BJ (cell line): ENCODE measurements at regions of chr7 and their contacts with region 1.

Region 1: DNA sequence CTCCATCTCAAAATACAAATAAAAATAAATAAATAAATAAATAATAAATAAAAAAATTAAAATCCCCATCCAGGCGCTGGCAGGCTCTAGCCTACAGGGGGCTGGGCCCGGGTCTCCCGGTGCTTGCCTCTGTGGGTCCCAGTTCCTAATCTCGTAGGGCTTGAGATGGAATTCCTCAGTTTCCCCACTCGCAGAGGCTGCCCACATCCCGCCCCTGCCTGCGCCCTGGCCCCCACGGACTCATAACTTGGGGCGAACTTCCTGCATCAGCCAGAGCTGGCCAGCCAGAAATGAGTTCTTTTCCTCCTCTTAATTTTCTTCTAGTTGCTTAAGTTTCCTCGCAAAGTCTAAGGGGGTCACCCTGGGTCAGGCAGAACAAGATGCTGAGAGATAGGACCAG is 22.0 kb upstream of the SRRM3 start:
- DNase-seq: no peak
- H3K4me3 ChIP-seq: no peak overlapping the region
- H3K27me3 ChIP-seq: no peaks in the 10 kb centered on the region
- CTCF ChIP-seq: no peak

Region 2: GRCh38 chr7:76166404-76167255 is 13.1 kb before region 1 on chr7:
- CTCF ChIA-PET with region 1: interaction called, 27 read pairs
- POLR2A ChIA-PET with region 1: no interaction called
- DNase-seq: peak; percentile 61
- H3K4me3 ChIP-seq: peak overlapping the region; percentile 69
- H3K27me3 ChIP-seq: no peaks in the 10 kb centered on the region
- CTCF ChIP-seq: peak; percentile 41; the same call in 1 of the 2 replicates

Region 3: DNA sequence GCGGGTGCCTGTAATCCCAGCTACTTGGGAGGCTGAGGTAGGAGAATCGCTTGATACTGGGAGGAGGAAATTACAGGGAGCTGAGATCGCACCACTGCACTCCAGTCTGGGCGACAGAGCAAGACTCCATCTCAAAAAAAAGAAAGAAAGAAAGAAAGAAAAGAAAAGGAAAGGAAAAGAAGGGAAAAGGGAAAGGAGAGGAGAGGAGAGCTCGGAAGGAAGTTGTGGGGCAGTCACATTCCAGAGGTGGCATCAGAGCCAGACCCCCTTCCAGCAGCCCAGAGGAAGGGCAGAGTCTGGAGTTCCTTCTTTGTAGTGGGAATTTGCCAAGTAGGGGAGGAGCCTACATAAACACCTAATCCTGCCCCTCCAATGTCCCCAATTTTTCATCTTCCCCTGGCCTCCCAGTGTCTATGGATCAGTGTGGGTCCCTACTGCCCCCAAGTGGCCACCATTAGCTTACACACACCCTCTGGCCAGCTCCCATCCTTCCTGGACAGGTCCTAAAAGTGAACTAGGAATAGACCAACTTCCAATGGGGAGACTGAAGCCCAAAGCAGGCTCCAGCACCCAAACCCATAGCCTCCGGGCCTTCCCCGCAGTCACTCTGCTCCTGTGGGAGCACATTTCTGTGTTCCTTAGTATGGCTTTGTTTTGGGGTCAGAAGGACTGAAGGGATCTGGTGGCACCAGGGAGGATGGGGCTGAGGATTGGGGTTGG is 83.2 kb after region 1 on chr7:
- CTCF ChIA-PET with region 1: interaction called, 48 read pairs
- POLR2A ChIA-PET with region 1: no interaction called
- DNase-seq: no peak
- H3K4me3 ChIP-seq: no peak overlapping the region
- H3K27me3 ChIP-seq: peaks cover 8% of the 10 kb centered on the region
- CTCF ChIP-seq: peak; percentile 86

Region 4: GRCh38 chr7:76291343-76292212 is 111.9 kb after region 1 on chr7:
- CTCF ChIA-PET with region 1: interaction called, 15 read pairs
- POLR2A ChIA-PET with region 1: no interaction called
- DNase-seq: peak; percentile 92
- H3K4me3 ChIP-seq: peak overlapping the region; percentile 14
- H3K27me3 ChIP-seq: no peaks in the 10 kb centered on the region
- CTCF ChIP-seq: peak; percentile 97

Region 5: DNA sequence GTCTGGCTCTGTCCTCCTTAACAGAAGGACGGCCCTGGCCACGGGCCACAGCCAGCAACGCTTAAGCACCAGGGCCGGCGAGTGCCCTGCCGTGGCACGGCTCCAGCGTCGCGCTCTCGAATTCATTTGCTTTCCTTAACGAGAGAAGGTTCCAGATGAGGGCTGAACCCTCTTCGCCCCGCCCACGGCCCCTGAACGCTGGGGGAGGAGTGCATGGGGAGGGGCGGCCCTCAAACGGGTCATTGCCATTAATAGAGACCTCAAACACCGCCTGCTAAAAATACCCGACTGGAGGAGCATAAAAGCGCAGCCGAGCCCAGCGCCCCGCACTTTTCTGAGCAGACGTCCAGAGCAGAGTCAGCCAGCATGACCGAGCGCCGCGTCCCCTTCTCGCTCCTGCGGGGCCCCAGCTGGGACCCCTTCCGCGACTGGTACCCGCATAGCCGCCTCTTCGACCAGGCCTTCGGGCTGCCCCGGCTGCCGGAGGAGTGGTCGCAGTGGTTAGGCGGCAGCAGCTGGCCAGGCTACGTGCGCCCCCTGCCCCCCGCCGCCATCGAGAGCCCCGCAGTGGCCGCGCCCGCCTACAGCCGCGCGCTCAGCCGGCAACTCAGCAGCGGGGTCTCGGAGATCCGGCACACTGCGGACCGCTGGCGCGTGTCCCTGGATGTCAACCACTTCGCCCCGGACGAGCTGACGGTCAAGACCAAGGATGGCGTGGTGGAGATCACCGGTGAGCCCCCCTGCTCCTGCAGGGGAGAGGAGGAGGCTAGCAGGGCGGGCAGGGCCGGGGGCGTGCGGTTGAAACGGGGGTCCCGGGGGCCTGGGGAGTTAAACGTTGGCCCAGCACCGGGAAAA is 122.9 kb after region 1 on chr7 and contains the start of gene HSPB1:
- CTCF ChIA-PET with region 1: interaction called, 19 read pairs
- POLR2A ChIA-PET with region 1: no interaction called
- DNase-seq: peak; percentile 68
- H3K4me3 ChIP-seq: peak within 1 kb of the TSS; percentile 98
- H3K27me3 ChIP-seq: no peaks in the 10 kb centered on the region
- CTCF ChIP-seq: no peak
- polyA plus RNA-seq, gene HSPB1: 642 and 966 TPM in 2 replicates

Region 6: GRCh38 chr7:76409537-76409936 is 229.9 kb after region 1 on chr7 and contains the start of gene SSC4D:
- CTCF ChIA-PET with region 1: no interaction called
- POLR2A ChIA-PET with region 1: no interaction called
- DNase-seq: no peak
- H3K4me3 ChIP-seq: no peak within 1 kb of the TSS
- H3K27me3 ChIP-seq: no peaks in the 10 kb centered on the region; the same call in 1 of the 2 replicates
- CTCF ChIP-seq: no peak
- polyA plus RNA-seq, gene SSC4D: 0.71 and 0.92 TPM in 2 replicates